ENCODE measurements at regions of chr1 and their contacts with region 1.

Region 1: DNA sequence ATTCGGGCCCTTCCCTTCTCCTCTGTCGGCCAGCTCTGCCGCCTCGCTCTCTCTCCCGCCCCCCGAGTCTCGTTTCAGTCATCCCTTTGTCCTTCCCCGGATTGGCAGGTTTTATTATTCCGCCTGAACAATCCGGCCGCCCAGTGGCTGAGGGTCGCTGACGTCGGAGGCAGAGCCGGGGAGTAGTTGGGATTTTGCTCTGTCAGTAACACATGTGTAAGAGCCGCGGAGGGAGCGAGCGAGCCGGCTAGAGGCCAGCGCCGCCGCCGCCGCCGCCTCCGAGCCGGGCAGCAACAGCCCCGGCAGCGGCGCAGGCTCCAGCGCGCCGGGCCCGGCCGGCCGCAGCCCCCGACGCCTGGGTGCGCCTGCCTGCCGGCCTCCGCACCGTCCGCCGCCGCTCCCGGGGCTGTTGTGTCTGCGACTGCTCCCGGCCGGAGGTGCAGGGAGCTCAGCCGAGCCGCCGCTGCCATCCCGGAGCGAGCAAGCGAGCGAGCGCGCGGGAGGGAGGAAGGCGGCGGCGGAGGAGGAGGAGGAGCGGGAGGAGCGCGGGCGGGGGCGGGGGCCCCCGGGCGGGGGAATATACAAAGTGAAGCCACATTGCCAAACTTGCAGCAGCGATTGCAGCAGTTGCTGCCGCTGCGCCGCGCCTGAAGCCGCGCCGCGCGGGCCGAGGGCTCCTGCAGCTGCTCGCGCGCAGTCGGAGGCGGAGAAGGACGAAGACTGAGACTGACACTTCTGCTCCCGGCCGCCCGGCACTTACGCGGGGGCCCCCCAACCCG is at the start of gene LMO4:
- DNase-seq: peak; percentile 99
- H3K4me3 ChIP-seq: peak within 1 kb of the TSS; percentile 77 to 91 (median 88)
- H3K27ac ChIP-seq: peak within 1 kb of the TSS; percentile 97 to 99 (median 98)
- H3K4me1 ChIP-seq: peaks cover 0 to 32% (median 20%) of the 10 kb centered on the region in 4 donors
- H3K27me3 ChIP-seq: no peaks in the 10 kb centered on the region
- CTCF ChIP-seq: no peak
- EP300 ChIP-seq: peak in 1 of 4 donors; percentile 12
- POLR2A ChIP-seq: peak; percentile 85 to 87
- total RNA-seq, gene LMO4: 41.7 to 68.3 (median 59.3) TPM

Region 2: GRCh38 chr1:87131809-87132283 is 196.6 kb before region 1 on chr1:
- intact Hi-C with region 1: loop called (anchors 5 kb)
- DNase-seq: peak; percentile 85
- H3K4me3 ChIP-seq: peak overlapping the region; percentile 31 to 54 (median 46)
- H3K27ac ChIP-seq: peak overlapping the region; percentile 6 to 57 (median 20)
- H3K4me1 ChIP-seq: peaks cover 0 to 12% (median 7%) of the 10 kb centered on the region in 4 donors
- H3K27me3 ChIP-seq: no peaks in the 10 kb centered on the region
- CTCF ChIP-seq: peak; percentile 52 to 93 (median 73)
- EP300 ChIP-seq: no peak
- POLR2A ChIP-seq: no peak

Region 3: DNA sequence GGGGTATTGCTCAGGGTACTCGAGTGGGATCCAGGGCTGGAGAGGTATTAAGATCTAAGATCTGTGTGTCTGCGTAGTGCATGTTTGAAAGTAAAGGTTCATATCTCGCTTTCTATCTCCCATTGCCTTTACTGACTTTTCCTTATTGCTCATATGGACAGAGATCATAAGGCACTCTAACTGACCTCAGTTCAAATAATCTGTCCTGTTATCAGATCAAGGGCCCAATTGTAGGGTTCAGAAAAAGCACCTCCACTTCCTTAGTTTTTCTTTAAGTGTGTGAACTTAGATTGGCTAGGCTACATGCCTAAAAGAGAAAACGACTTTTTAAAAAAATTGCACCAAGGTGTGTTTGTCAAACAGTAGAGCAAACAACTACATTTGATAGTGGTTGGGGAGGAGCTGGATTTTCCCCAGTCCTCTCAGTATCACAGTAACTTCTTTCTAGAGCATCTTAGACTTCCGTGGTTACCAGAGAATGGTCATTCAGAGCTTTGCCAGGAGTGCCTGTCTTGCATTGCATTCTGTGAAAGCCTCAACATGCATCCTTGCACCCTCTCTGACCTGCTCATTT is 57.8 kb after region 1 on chr1:
- intact Hi-C with region 1: no loop called
- DNase-seq: no peak
- H3K4me3 ChIP-seq: no peak overlapping the region
- H3K27ac ChIP-seq: no peak overlapping the region
- H3K4me1 ChIP-seq: no peaks in the 10 kb centered on the region
- H3K27me3 ChIP-seq: no peaks in the 10 kb centered on the region
- CTCF ChIP-seq: no peak
- EP300 ChIP-seq: no peak
- POLR2A ChIP-seq: no peak

Region 4: GRCh38 chr1:87592156-87592555 is 263.7 kb after region 1 on chr1:
- intact Hi-C with region 1: loop called (anchors 5 kb)
- DNase-seq: no peak
- H3K4me3 ChIP-seq: no peak overlapping the region
- H3K27ac ChIP-seq: no peak overlapping the region
- H3K4me1 ChIP-seq: peaks cover 0 to 34% (median 24%) of the 10 kb centered on the region in 4 donors
- H3K27me3 ChIP-seq: no peaks in the 10 kb centered on the region
- CTCF ChIP-seq: no peak
- EP300 ChIP-seq: no peak
- POLR2A ChIP-seq: no peak

Region 5: DNA sequence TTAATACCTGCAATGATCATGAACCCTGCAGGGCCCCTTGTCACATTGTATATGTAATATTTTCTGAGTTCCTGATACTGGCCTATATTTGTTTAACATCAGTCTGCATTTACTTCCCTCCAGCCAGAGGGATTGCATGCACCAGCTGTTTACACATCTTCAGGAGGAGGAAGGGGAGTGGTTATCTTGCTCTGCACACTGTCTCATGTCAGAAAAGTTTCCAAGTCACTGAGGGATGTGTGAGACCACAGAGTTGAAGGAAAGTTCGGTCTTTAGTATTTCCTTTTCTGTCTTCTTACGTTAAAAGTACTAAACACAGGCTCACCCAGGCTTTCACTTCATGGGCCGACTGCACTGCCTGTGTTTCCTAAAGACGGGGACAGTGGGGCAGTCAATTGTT is 574.4 kb after region 1 on chr1:
- intact Hi-C with region 1: loop called (anchors 5 kb)
- DNase-seq: peak; percentile 66
- H3K4me3 ChIP-seq: peak overlapping the region in 1 of 4 donors; percentile 6
- H3K27ac ChIP-seq: peak overlapping the region in 3 of 4 donors; percentile 57 to 75 (median 58)
- H3K4me1 ChIP-seq: peaks cover 0 to 59% (median 54%) of the 10 kb centered on the region in 4 donors
- H3K27me3 ChIP-seq: no peaks in the 10 kb centered on the region
- CTCF ChIP-seq: no peak
- EP300 ChIP-seq: peak in 1 of 4 donors; percentile 34
- POLR2A ChIP-seq: no peak

Region 6: DNA sequence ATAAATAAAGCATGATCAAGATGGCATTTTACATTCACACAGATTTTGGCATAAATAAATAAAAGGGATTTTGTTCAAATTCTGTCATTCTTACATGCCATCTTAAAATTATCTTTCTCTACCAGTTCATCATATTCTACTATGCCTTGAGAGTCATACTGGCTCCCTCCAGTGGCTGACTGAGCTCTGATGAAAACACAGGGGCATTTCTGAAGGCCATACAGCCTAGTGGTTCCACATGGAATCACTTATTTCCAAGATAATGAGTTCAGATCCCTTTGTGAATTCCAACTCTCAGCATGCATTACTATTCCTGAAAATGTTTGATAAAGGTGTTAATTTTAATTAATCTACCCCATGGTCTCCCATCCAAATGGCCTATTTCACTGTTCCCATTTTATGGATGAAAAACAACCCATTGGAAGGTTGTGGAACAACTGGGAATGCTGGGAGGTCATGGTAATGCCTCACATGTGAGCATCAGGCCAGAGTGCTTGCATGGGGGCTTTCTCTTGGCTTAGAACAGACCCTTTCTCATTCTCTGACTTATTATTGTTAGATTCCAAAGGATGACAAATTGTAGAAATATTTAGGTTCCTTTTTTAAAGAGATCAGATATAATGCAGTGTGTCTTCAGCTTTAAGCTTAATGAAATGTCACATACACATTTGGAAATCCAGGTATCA is 733.2 kb after region 1 on chr1:
- intact Hi-C with region 1: loop called (anchors 2 kb)
- DNase-seq: peak; percentile 72
- H3K4me3 ChIP-seq: no peak overlapping the region
- H3K27ac ChIP-seq: no peak overlapping the region
- H3K4me1 ChIP-seq: peaks cover 0 to 12% (median 6%) of the 10 kb centered on the region in 4 donors
- H3K27me3 ChIP-seq: no peaks in the 10 kb centered on the region
- CTCF ChIP-seq: peak; percentile 37 to 83 (median 76)
- EP300 ChIP-seq: no peak
- POLR2A ChIP-seq: no peak

Measured in sigmoid colon (tissue), 7 donors.